MCF 10A (cell line): ENCODE measurements at regions of chr2 and their contacts with region 1.

Region 1: GRCh38 chr2:46364797-46365457 is 67.7 kb downstream of the EPAS1 start:
- DNase-seq: peak; percentile 67
- H3K4me3 Mint-ChIP-seq: no peak overlapping the region
- H3K27ac Mint-ChIP-seq: no peak overlapping the region
- H3K4me1 Mint-ChIP-seq: peaks cover 9% of the 10 kb centered on the region
- H3K27me3 Mint-ChIP-seq: no peaks in the 10 kb centered on the region
- CTCF ChIP-seq: peak; percentile 73

Region 2: DNA sequence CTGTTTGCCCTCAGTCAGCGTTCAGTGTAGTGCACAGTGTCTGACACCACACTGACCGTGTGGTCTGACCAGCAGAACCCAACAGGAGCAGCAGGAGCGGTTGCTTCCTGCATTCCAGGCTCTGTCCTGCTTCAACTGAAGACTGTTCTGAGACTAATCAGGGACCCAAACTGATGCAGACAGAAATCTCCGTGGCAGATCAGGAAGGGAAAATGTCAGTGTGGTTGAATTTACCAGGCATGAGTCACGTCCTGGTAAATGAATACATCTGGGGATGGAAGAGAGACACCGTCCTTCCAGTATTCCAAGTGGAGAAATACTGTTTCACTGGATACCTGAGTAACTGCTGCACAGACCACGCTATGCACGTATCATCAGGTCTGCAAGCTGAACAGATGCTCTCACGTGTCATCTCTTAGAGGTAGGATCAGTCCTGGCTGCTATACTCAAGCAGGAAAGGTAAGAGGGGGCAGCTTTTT is 291.3 kb before region 1 on chr2:
- CTCF ChIA-PET with region 1: no interaction called
- POLR2A ChIA-PET with region 1: no interaction called
- intact Hi-C with region 1: loop called (anchors 5 kb)
- DNase-seq: peak; percentile 77
- H3K4me3 Mint-ChIP-seq: no peak overlapping the region
- H3K27ac Mint-ChIP-seq: peak overlapping the region; percentile 35
- H3K4me1 Mint-ChIP-seq: peaks cover 19% of the 10 kb centered on the region
- H3K27me3 Mint-ChIP-seq: no peaks in the 10 kb centered on the region
- CTCF ChIP-seq: no peak

Region 3: GRCh38 chr2:46257476-46257875 is 107.5 kb before region 1 on chr2:
- CTCF ChIA-PET with region 1: no interaction called
- POLR2A ChIA-PET with region 1: no interaction called
- intact Hi-C with region 1: no loop called
- DNase-seq: no peak
- H3K4me3 Mint-ChIP-seq: no peak overlapping the region
- H3K27ac Mint-ChIP-seq: no peak overlapping the region
- H3K4me1 Mint-ChIP-seq: peaks cover 11% of the 10 kb centered on the region
- H3K27me3 Mint-ChIP-seq: no peaks in the 10 kb centered on the region
- CTCF ChIP-seq: no peak

Region 4: DNA sequence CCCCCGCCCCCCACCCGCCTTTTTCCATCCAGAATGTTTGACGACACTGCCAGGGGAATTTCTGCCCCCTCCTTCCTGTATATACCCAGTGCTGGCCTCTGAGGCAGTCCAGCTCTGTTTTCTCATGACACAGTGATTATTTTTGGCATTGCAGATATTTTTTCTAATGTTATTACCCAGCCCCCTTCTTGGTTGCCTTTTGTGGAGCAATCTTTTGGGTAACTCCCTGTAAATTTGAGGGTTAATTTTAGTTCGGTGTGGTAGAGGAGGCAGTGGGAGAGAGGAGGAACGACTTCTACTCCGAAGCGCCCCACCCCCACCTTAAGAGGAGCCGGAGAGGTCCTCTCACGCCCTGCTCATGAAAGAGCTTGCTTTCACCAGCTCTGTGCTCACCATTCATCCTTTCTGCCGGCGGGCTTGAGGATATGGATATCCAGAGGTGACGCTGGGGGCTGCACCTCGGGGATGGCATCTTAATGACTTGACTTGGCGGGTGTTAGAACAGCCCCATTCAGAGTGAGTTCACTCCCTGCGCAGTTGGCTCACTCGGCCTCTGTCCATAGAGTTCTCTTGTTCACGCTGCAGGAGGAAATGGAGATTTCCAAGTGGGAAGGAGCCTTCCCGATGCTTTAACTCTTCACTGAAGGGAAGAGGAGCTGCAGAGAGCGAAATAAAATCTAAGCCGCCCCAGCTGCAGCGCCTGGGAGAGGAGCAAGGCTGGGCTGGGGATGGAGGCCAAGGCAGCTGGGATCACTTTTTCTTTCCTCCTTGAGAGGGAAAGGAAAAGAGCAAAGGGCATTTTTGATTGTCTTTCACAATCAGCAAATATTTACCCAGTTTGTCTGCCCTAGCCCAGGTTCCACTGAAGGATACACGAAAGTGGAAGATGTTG is 29.3 kb before region 1 on chr2:
- CTCF ChIA-PET with region 1: interaction called, 4 read pairs
- POLR2A ChIA-PET with region 1: interaction called, 4 read pairs
- intact Hi-C with region 1: loop called (anchors 2 kb)
- DNase-seq: peak; percentile 56
- H3K4me3 Mint-ChIP-seq: peak overlapping the region; percentile 46
- H3K27ac Mint-ChIP-seq: peak overlapping the region; percentile 95
- H3K4me1 Mint-ChIP-seq: peaks cover 64% of the 10 kb centered on the region
- H3K27me3 Mint-ChIP-seq: no peaks in the 10 kb centered on the region
- CTCF ChIP-seq: no peak

Region 5: GRCh38 chr2:46346711-46347500 is 18.0 kb before region 1 on chr2:
- CTCF ChIA-PET with region 1: no interaction called
- POLR2A ChIA-PET with region 1: no interaction called
- intact Hi-C with region 1: no loop called
- DNase-seq: no peak
- H3K4me3 Mint-ChIP-seq: no peak overlapping the region
- H3K27ac Mint-ChIP-seq: no peak overlapping the region
- H3K4me1 Mint-ChIP-seq: no peaks in the 10 kb centered on the region
- H3K27me3 Mint-ChIP-seq: no peaks in the 10 kb centered on the region
- CTCF ChIP-seq: no peak

Region 6: DNA sequence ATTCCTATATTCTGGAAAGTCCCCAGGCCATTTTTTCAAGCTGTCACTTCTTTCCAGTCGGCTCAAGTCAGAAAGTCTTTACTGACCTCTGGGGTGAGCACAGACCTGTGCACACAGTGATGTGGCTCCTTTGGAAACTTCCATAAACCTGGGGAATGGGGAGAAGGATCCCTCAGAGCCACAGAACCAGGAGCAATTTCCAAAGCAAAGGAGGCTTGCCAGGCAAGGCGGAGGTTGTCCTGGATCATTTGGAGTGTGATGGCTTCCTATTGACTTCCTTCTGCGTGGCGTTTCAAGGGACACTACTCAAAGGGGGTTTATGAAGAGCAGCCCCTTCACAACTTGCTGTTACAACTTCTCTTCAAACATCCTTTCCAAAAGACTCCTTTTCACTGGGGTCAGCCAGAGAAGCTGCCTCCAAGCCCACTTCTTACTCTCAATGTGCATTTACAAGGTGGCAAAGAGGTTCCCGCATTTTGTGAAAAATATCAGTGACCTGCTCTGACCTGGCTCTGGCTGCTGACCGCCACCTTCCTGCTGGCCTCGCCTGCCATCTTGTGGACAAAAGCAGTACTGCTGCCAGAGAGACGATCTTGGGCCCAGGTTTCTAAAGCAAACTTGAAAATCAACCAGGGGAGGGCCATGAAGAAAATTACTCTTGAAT is 96.2 kb after region 1 on chr2:
- CTCF ChIA-PET with region 1: interaction called, 13 read pairs
- POLR2A ChIA-PET with region 1: no interaction called
- intact Hi-C with region 1: loop called (anchors 1 kb)
- DNase-seq: peak; percentile 68
- H3K4me3 Mint-ChIP-seq: no peak overlapping the region
- H3K27ac Mint-ChIP-seq: peak overlapping the region; percentile 33
- H3K4me1 Mint-ChIP-seq: peaks cover 6% of the 10 kb centered on the region
- H3K27me3 Mint-ChIP-seq: no peaks in the 10 kb centered on the region
- CTCF ChIP-seq: peak; percentile 99